ENCODE measurements at regions of chr2 and their contacts with region 1.

Region 1: DNA sequence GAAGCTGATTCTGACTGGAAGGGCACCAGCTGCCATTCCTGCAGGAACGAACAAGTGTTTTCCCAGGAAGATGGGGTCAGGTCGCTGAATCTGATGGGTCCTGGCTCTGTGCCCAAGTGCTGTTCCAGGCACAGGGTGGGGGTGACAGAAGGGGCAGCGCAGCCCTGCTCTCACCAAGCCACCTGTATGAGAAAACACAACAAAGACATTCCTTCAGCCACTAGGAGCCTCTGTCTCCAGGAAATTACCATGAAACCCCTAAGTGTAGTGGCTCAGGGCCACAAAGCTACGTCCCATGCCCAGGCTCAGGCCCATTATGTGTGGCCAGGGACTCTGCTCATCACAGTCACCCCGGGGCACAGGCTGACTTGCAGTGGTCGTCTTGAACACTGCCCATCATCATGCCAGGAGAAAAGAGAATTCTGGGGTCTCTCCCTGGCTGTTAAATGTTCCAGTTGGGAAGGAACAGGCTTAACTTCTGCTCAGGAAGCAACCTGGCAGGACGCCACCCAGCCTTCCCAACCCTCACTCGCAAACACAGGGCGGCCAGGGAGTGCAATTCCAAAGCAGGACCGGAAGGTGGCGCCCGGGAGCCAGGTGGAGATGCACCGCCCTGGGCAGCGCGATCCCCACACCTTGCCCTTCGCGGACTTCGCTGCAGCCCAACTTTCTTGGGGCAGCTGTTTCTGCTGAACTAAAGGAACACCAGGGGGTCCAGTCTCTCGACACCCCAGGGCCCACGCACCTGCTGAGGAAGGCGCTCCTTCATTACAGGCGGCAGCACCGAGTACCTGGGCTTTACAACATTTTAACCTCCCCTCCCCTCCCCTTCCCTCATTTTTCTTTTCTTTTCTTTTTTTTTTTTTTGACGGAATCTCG is 11.0 kb upstream of the SFTPB start:
- DNase-seq: peak; percentile 96
- H3K4me3 ChIP-seq: peak overlapping the region in 1 of 4 donors; percentile 25
- H3K27ac ChIP-seq: peak overlapping the region in 2 of 4 donors; percentile 3 to 49
- H3K4me1 ChIP-seq: peaks cover 21 to 35% (median 24%) of the 10 kb centered on the region in 4 donors
- H3K27me3 ChIP-seq: no peaks in the 10 kb centered on the region
- CTCF ChIP-seq: peak; percentile 95 to 100 (median 97)
- EP300 ChIP-seq: no peak
- POLR2A ChIP-seq: no peak

Region 2: DNA sequence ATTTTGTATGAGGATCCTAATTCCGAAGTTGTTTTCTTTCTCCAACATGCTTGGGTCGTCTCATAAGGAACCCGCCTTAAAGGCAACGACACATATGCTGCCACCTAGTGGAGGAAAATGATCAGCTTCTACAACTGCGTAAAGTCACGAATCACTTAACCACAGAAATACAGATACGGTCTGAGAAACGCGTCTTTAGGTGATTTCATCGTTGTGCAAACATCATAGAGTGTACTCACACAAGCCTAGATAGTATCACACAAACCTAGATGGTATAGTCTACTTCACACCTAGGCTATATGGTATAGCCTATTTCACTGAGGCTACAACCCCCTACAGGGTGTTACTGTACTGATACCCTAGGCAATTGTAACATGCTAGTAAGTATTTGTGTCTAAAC is 28.3 kb after region 1 on chr2:
- intact Hi-C with region 1: loop called (anchors 2 kb)
- DNase-seq: no peak
- H3K4me3 ChIP-seq: no peak overlapping the region
- H3K27ac ChIP-seq: peak overlapping the region; percentile 30 to 72 (median 70)
- H3K4me1 ChIP-seq: peaks cover 42 to 71% (median 60%) of the 10 kb centered on the region in 4 donors
- H3K27me3 ChIP-seq: peaks cover 0 to 3% (median 0%) of the 10 kb centered on the region in 4 donors
- CTCF ChIP-seq: peak; percentile 77 to 88 (median 85)
- EP300 ChIP-seq: no peak
- POLR2A ChIP-seq: no peak

Region 3: GRCh38 chr2:85843543-85843942 is 164.5 kb after region 1 on chr2:
- intact Hi-C with region 1: no loop called
- DNase-seq: peak; percentile 70
- H3K4me3 ChIP-seq: no peak overlapping the region
- H3K27ac ChIP-seq: no peak overlapping the region
- H3K4me1 ChIP-seq: no peaks in the 10 kb centered on the region
- H3K27me3 ChIP-seq: no peaks in the 10 kb centered on the region
- CTCF ChIP-seq: peak in 1 of 3 experiments; percentile 36
- EP300 ChIP-seq: no peak
- POLR2A ChIP-seq: no peak

Region 4: DNA sequence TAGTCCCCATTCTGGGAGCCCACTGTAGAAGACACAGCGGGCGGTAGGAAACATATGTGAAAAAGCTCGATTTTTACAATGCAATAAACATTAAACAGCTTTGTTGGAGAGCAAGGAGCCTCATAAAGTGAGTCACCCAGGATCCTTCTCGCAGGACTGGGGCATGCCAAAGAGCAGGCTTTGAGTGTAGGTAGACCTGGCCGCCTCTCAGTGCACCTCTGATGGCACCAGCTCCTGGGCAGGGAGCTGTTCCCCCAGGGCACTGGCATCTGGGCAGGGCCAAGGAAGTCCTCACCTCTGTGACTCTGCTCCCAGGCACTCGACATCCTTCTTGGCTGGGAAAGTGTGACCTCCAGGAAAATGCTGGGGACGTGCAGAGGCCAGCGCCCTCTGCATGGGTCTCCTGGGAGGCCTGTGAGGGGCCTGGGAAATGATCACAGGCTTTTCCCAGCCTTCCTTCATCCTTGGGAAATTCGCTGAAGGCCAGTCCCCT is 332.5 kb after region 1 on chr2:
- intact Hi-C with region 1: no loop called
- DNase-seq: no peak
- H3K4me3 ChIP-seq: no peak overlapping the region
- H3K27ac ChIP-seq: no peak overlapping the region
- H3K4me1 ChIP-seq: no peaks in the 10 kb centered on the region
- H3K27me3 ChIP-seq: no peaks in the 10 kb centered on the region
- CTCF ChIP-seq: no peak
- EP300 ChIP-seq: no peak
- POLR2A ChIP-seq: no peak